Activated CD4-positive, alpha-beta T cell treated with anti-CD3 and anti-CD28 coated beads, Interleukin-2, amount 10 ng/mL, durations not matched to agents 24 days and 14 days (primary cell): ENCODE measurements at regions of chr4 and their contacts with region 1.

Region 1: GRCh38 chr4:76949276-76950051 is at the start of gene SEPTIN11:
- DNase-seq: peak; percentile 91
- H3K4me3 Mint-ChIP-seq: peak within 1 kb of the TSS; percentile 87
- H3K27ac Mint-ChIP-seq: peak within 1 kb of the TSS; percentile 62
- H3K4me1 Mint-ChIP-seq: peaks cover 17% of the 10 kb centered on the region
- H3K27me3 Mint-ChIP-seq: peaks cover 67% of the 10 kb centered on the region
- total RNA-seq, gene SEPTIN11: 15.4 and 17.0 TPM in 2 replicates

Region 2: GRCh38 chr4:76896731-76897535 is 52.5 kb before region 1 on chr4:
- intact Hi-C with region 1: loop called (anchors 5 kb)
- DNase-seq: peak; percentile 65
- H3K4me3 Mint-ChIP-seq: no peak overlapping the region
- H3K27ac Mint-ChIP-seq: no peak overlapping the region
- H3K4me1 Mint-ChIP-seq: peaks cover 10% of the 10 kb centered on the region
- H3K27me3 Mint-ChIP-seq: peaks cover 53% of the 10 kb centered on the region

Region 3: GRCh38 chr4:76939184-76939583 is 10.3 kb before region 1 on chr4:
- intact Hi-C with region 1: no loop called
- DNase-seq: no peak
- H3K4me3 Mint-ChIP-seq: no peak overlapping the region
- H3K27ac Mint-ChIP-seq: no peak overlapping the region
- H3K4me1 Mint-ChIP-seq: no peaks in the 10 kb centered on the region
- H3K27me3 Mint-ChIP-seq: peaks cover 49% of the 10 kb centered on the region

Region 4: GRCh38 chr4:76960014-76960413 is 10.6 kb after region 1 on chr4:
- intact Hi-C with region 1: loop called (anchors 1 kb)
- DNase-seq: peak; percentile 63
- H3K4me3 Mint-ChIP-seq: no peak overlapping the region
- H3K27ac Mint-ChIP-seq: no peak overlapping the region
- H3K4me1 Mint-ChIP-seq: peaks cover 11% of the 10 kb centered on the region
- H3K27me3 Mint-ChIP-seq: peaks cover 57% of the 10 kb centered on the region

Region 5: DNA sequence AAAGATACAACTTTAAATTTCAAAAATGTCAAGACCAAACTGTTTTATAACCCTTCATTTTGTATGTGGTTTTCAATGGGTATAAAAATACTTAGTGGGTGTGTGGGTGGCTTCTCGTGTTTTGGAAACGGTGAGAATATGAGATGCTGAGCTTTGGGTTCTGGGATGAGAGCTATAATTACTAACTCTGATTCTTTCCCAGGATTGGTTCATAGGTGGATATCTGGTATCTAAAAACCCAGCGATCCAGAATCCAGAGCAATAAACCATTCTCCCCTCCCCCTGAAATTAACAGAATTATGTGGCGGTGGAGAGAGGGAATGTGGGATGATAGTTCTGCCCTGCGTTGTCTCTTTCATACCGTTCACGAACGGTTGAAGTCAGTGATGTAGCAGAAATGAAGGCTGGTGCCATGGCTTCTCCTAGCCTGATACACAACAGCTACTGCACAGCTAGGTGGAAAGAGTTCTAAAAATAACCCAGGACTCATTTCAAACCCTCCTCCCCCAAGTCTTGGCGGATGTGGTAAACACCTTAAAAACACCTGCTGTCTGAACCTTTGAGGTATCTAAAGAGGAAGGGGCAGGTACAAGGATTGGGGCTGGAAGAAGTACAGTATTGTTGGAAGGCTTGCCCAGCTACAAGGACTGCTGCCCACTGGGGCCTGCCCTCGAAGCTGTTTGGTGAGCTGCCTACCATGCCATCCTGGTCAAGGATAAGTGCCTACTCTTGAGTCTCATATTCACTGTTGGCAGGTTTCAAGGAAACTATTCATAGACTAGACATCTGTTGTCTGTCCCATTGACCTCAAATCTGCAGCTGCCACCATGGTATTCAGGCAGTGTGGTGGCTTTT is 44.5 kb after region 1 on chr4:
- intact Hi-C with region 1: loop called (anchors 2 kb)
- DNase-seq: peak; percentile 87
- H3K4me3 Mint-ChIP-seq: peak overlapping the region; percentile 67
- H3K27ac Mint-ChIP-seq: peak overlapping the region; percentile 79
- H3K4me1 Mint-ChIP-seq: peaks cover 40% of the 10 kb centered on the region
- H3K27me3 Mint-ChIP-seq: peaks cover 26% of the 10 kb centered on the region

Region 6: GRCh38 chr4:77248810-77249209 is 299.3 kb after region 1 on chr4:
- intact Hi-C with region 1: no loop called
- DNase-seq: no peak
- H3K4me3 Mint-ChIP-seq: no peak overlapping the region
- H3K27ac Mint-ChIP-seq: no peak overlapping the region
- H3K4me1 Mint-ChIP-seq: no peaks in the 10 kb centered on the region
- H3K27me3 Mint-ChIP-seq: no peaks in the 10 kb centered on the region